ENCODE measurements at regions of chr12 and their contacts with region 1.

Region 1: DNA sequence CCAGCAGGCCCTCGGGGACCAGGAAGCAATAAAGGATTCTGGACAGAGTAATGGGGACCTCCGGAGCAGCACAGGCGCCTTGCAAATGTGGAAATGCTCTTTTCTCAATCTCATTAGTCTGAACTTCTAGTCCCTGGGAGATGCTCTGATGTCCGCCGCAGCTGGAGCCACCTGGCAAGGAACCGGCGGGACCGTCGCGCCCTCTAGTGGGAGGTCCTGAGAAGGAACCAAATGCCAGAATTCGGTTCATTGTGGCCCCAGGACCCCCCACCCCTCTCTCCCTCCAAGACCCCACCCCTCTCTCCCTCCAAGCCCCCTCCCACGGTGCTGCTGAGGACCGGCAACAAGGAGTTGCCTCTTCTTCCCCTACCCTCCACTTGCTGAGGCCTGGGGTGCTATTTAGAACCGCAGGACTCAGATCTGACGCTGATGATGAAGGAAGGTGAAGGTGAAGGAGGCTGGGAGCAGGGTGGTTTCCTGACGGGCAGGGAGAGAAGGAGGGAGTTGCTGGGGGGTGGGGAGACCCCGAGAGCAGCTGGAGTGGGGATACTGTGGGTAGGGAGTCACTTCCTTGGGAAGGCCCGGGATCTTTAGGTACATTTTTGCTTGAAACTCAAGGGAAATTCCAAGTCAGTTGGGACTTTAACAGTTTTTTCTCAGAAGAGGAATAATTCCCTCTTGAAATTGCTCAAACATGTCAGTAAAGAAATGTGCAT is 42.5 kb downstream of the SMIM41 start:
- DNase-seq: peak; percentile 68 to 73 (median 72)
- ATAC-seq: peak; percentile 72
- H3K4me3 ChIP-seq: no peak overlapping the region
- H3K27ac ChIP-seq: no peak overlapping the region
- H3K4me1 ChIP-seq: peaks cover 8 to 14% of the 10 kb centered on the region in 2 experiments; a peak in 3 of 5 replicates
- H3K27me3 ChIP-seq: peaks cover 20 to 62% of the 10 kb centered on the region in 2 experiments
- CTCF ChIP-seq: peak; percentile 70 to 86 (median 79)
- EP300 ChIP-seq: no peak
- POLR2A ChIP-seq: no peak
- RAD21 ChIP-seq: peak; percentile 28 to 69; a peak in 3 of 4 replicates

Region 2: DNA sequence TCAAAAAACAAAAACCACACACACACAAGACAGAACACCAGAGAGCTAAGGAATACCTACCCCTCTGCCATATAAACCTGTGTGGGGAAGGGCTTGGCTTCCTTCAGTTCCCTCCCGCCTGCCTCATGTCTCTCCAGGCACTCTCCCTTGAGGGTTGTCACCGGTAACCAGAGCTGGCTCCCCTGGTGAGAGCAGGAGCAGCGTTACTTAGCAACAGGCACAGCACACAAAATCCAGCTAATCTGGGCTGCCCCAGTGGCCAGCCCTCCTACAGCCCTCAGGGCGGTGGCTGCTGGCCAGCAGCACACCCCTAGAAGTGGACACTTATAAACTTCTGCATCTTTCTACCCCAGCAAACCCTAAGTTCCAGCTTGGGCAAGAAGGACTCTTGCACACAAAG is 92.3 kb before region 1 on chr12:
- CTCF ChIA-PET with region 1: interaction called, 32 read pairs
- POLR2A ChIA-PET with region 1: interaction called, 3 read pairs
- in situ Hi-C with region 1: loop called (anchors 5 kb)
- intact Hi-C with region 1: loop called (anchors 1 kb)
- DNase-seq: peak in 2 of 4 experiments; percentile 55
- ATAC-seq: peak; percentile 18
- H3K4me3 ChIP-seq: no peak overlapping the region
- H3K27ac ChIP-seq: no peak overlapping the region
- H3K4me1 ChIP-seq: peaks cover 14 to 18% of the 10 kb centered on the region in 2 experiments; a peak in 3 of 5 replicates
- H3K27me3 ChIP-seq: peaks cover 0 to 23% of the 10 kb centered on the region in 2 experiments; a peak in 3 of 5 replicates
- CTCF ChIP-seq: no peak
- EP300 ChIP-seq: no peak
- POLR2A ChIP-seq: no peak
- RAD21 ChIP-seq: no peak

Measured in K562 (cell line).